Heart left ventricle (tissue), 16 donors: ENCODE measurements at regions of chr1 and their contacts with region 1.

Region 1: DNA sequence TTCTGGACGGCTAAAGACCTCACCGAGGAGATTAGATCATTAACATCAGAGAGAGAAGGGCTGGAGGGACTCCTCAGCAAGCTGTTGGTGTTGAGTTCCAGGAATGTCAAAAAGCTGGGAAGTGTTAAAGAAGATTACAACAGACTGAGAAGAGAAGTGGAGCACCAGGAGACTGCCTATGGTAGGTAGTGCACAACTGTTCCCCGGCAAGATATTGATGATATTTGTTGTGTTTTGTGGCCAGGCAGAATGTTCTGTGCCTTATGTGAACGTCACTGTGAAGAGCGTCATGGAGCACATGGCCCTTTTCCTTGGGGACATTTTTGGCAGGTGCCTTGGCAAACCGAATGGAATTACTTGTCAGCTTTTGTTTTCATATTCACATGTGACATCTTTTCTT is 191.7 kb downstream of the DISC1 start:
- DNase-seq: peak in 4 of 5 donors; percentile 37 to 83 (median 56)
- ATAC-seq: peak; percentile 87 to 91 (median 88)
- H3K4me3 ChIP-seq: no peak overlapping the region
- H3K27ac ChIP-seq: peak overlapping the region; percentile 7 to 89 (median 56)
- H3K4me1 ChIP-seq: peaks cover 0 to 50% (median 12%) of the 10 kb centered on the region in 12 donors
- H3K27me3 ChIP-seq: no peaks in the 10 kb centered on the region
- CTCF ChIP-seq: no peak
- POLR2A ChIP-seq: no peak

Region 2: DNA sequence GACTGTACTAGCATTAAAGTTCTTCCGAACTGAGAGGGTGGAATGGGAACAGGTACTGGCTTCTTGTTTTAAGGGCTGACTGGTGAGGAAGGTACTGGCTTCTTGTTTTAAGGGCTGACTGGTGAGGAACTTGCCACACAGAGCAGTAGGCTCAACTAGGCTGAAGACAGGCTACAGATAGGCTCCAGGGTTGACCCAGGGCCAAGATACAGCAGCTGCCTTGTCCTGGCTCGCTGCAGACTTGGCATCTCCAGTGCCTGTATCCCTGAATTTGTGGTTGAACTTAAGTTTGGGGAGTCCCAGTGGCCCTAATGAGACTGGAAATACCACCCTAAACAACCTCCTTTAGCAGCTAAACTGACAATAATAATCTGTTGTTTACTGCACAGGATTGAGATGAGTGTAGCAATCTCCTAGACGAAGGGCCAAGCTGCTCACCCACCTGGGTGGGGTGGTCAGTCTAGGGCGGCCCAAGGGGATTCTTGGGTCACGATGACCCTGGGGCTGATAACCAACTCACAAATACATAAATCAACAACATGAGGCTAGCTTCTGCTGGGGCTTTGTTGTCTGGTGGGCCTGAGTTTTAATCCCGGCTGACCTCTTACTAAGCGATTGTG is 35.4 kb after region 1 on chr1:
- intact Hi-C with region 1: loop called in 1 of 10 experiments (anchors 5 kb)
- DNase-seq: peak in 4 of 5 donors; percentile 36 to 84 (median 64)
- ATAC-seq: peak; percentile 53 to 62 (median 57)
- H3K4me3 ChIP-seq: no peak overlapping the region
- H3K27ac ChIP-seq: peak overlapping the region in 3 of 12 donors; percentile 20 to 47 (median 39)
- H3K4me1 ChIP-seq: peaks cover 0 to 33% (median 18%) of the 10 kb centered on the region in 12 donors
- H3K27me3 ChIP-seq: no peaks in the 10 kb centered on the region
- CTCF ChIP-seq: no peak
- POLR2A ChIP-seq: no peak